Esophagus muscularis mucosa (tissue), 4 donors: ENCODE measurements at regions of chr1 and their contacts with region 1.

Region 1: DNA sequence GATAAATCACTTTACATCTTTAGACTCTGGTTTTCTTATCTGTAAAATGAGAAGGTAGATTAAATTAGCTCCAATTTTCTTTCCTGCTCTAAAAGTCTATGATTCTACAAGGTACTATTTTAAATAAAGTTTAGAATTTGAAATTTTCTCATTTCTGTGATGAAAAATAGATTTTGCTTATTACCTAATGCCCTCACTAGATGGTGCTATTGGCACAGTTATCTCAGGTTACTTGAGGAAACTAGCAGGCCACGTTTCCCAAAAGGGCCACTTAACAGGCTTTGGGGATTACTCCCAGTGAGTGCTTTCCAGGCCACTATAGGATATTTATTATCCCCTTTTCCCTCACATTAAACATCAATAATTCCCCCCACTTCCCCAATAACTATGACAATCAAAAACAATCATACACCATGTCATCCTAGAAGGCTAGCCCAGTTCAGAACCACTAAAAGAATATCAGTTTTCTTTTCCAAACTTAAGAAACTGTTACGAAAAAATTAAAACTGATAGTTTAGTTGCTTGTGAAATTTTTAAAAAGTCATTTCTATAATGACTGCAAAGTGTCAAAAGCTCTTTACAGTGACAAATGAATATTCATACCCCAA is 30.6 kb downstream of the OMA1 start:
- DNase-seq: no peak
- H3K4me3 ChIP-seq: no peak overlapping the region
- H3K27ac ChIP-seq: peak overlapping the region in 1 of 4 donors; percentile 15
- H3K4me1 ChIP-seq: peaks cover 0 to 10% (median 2%) of the 10 kb centered on the region in 4 donors
- H3K27me3 ChIP-seq: no peaks in the 10 kb centered on the region
- CTCF ChIP-seq: peak; percentile 66 to 80 (median 68)
- EP300 ChIP-seq: no peak
- POLR2A ChIP-seq: no peak

Region 2: GRCh38 chr1:58104960-58105359 is 410.9 kb before region 1 on chr1:
- intact Hi-C with region 1: no loop called
- DNase-seq: no peak
- H3K4me3 ChIP-seq: no peak overlapping the region
- H3K27ac ChIP-seq: no peak overlapping the region
- H3K4me1 ChIP-seq: no peaks in the 10 kb centered on the region
- H3K27me3 ChIP-seq: no peaks in the 10 kb centered on the region
- CTCF ChIP-seq: no peak
- EP300 ChIP-seq: no peak
- POLR2A ChIP-seq: no peak

Region 3: DNA sequence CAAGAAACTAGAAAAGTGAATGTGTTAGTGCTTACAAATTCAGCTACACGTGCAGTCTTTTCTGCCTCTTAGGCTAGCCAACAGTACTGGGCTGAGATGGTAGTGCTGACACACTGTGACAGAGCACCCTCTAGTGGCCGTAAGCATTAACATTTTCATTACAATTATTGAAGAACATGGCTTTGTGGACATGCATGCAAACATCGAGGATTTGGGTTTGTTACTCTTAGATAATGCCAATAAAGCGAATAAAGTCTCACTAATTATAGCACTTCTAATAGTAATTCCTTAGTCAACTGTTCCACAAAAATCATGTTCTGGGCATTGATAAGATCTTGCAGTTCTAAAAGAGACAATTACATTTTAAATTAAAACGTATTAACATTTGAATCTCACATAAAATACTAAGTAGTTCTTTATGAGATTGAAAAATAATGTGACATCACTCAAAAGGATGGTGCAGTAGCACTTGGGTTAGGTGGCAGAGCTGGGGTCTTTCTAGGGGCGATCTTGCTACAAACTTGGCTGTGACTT is 136.8 kb after region 1 on chr1:
- intact Hi-C with region 1: loop called (anchors 2 kb)
- DNase-seq: no peak
- H3K4me3 ChIP-seq: no peak overlapping the region
- H3K27ac ChIP-seq: no peak overlapping the region
- H3K4me1 ChIP-seq: peaks cover 0 to 16% (median 11%) of the 10 kb centered on the region in 4 donors
- H3K27me3 ChIP-seq: no peaks in the 10 kb centered on the region
- CTCF ChIP-seq: peak; percentile 80 to 85 (median 82)
- EP300 ChIP-seq: no peak
- POLR2A ChIP-seq: no peak